ENCODE measurements at regions of chr6 and their contacts with region 1.

Region 1: GRCh38 chr6:24949020-24949569 is 13.3 kb upstream of the RIPOR2 start:
- DNase-seq: peak in 9 of 10 donors; percentile 44 to 90 (median 68)
- ATAC-seq: peak; percentile 70 to 73
- H3K4me3 Mint-ChIP-seq: peak overlapping the region; percentile 52 to 81 (median 75)
- H3K27ac Mint-ChIP-seq: peak overlapping the region; percentile 70 to 100 (median 96)
- H3K4me1 Mint-ChIP-seq: peaks cover 30 to 84% (median 76%) of the 10 kb centered on the region in 4 donors
- H3K27me3 Mint-ChIP-seq: no peaks in the 10 kb centered on the region

Region 2: GRCh38 chr6:24824142-24824938 is 124.8 kb before region 1 on chr6:
- POLR2A ChIA-PET with region 1: no interaction called
- DNase-seq: no peak
- ATAC-seq: no peak
- H3K4me3 Mint-ChIP-seq: peak overlapping the region in 1 of 10 donors; percentile 7
- H3K27ac Mint-ChIP-seq: peak overlapping the region in 9 of 10 donors; percentile 15 to 75 (median 34)
- H3K4me1 Mint-ChIP-seq: peaks cover 7 to 30% (median 24%) of the 10 kb centered on the region in 4 donors
- H3K27me3 Mint-ChIP-seq: no peaks in the 10 kb centered on the region

Region 3: GRCh38 chr6:24910961-24911712 is 38.0 kb before region 1 on chr6:
- POLR2A ChIA-PET with region 1: interaction called, 30 read pairs
- DNase-seq: peak in 5 of 10 donors; percentile 39 to 70 (median 56)
- ATAC-seq: peak; percentile 39 to 45
- H3K4me3 Mint-ChIP-seq: peak overlapping the region; percentile 81 to 99 (median 94)
- H3K27ac Mint-ChIP-seq: peak overlapping the region; percentile 96 to 99 (median 98)
- H3K4me1 Mint-ChIP-seq: peaks cover 75 to 100% (median 98%) of the 10 kb centered on the region in 4 donors
- H3K27me3 Mint-ChIP-seq: no peaks in the 10 kb centered on the region

Region 4: GRCh38 chr6:24933868-24934401 is 15.2 kb before region 1 on chr6:
- POLR2A ChIA-PET with region 1: interaction called, 1,085 read pairs
- DNase-seq: peak in 8 of 10 donors; percentile 42 to 81 (median 65)
- ATAC-seq: peak; percentile 8 to 27
- H3K4me3 Mint-ChIP-seq: peak overlapping the region; percentile 81 to 99 (median 98)
- H3K27ac Mint-ChIP-seq: peak overlapping the region; percentile 87 to 98 (median 95)
- H3K4me1 Mint-ChIP-seq: peaks cover 29 to 69% (median 54%) of the 10 kb centered on the region in 4 donors
- H3K27me3 Mint-ChIP-seq: no peaks in the 10 kb centered on the region

Region 5: GRCh38 chr6:24968786-24969185 is 19.7 kb after region 1 on chr6:
- POLR2A ChIA-PET with region 1: interaction called, 145 read pairs
- DNase-seq: no peak
- ATAC-seq: peak; percentile 35 to 52
- H3K4me3 Mint-ChIP-seq: peak overlapping the region in 3 of 10 donors; percentile 24 to 41 (median 34)
- H3K27ac Mint-ChIP-seq: peak overlapping the region in 8 of 10 donors; percentile 0 to 88 (median 56)
- H3K4me1 Mint-ChIP-seq: peaks cover 39 to 88% (median 82%) of the 10 kb centered on the region in 4 donors
- H3K27me3 Mint-ChIP-seq: no peaks in the 10 kb centered on the region

Region 6: GRCh38 chr6:24991810-24992467 is 42.8 kb after region 1 on chr6:
- POLR2A ChIA-PET with region 1: interaction called, 135 read pairs
- DNase-seq: peak; percentile 50 to 90 (median 78)
- ATAC-seq: peak; percentile 86 to 88
- H3K4me3 Mint-ChIP-seq: peak overlapping the region; percentile 36 to 82 (median 70)
- H3K27ac Mint-ChIP-seq: peak overlapping the region; percentile 89 to 96 (median 93)
- H3K4me1 Mint-ChIP-seq: peaks cover 44 to 82% (median 77%) of the 10 kb centered on the region in 4 donors
- H3K27me3 Mint-ChIP-seq: no peaks in the 10 kb centered on the region